ENCODE measurements at regions of chr12 and their contacts with region 1.

Region 1: DNA sequence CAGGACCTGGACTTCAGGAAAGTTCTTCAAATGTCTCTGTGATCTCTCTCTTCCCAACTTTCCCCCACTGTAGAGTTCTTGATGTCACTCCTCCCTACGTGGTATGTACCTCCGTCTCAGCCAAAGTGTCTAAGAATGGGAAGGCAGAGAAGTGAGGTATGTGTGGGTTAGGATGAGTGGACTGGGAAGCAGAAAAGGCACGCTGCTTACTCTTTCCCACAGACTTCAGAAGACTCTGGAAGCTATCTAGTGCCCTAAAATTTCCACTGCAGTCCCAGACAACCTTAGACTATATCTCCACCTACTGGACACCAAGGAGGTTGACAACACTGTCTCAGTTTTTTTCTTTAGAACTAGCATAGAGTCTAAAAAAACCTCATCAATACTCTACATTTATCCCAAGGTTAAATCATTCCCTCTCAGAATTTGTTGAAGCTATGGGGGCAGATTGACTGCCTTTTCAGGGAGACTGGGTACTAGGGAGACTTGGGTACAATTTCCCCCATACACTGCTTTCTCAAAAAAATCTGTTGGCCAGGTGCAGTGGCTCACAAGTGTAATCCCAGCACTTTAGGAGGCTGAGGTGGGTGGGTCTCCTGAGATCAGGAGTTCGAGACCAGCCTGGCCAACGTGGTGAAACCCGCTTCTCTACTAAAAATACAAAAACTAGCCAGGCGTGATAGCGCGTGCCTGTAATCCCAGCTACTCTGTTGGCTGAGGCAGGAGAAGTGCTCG is 20.6 kb upstream of the ITGA5 start:
- DNase-seq: no peak
- H3K4me3 ChIP-seq: peak overlapping the region in 1 of 2 donors; percentile 12
- H3K27ac ChIP-seq: peak overlapping the region; percentile 57 to 74
- H3K4me1 ChIP-seq: peaks cover 0 to 36% (median 8%) of the 10 kb centered on the region in 4 donors
- H3K27me3 ChIP-seq: no peaks in the 10 kb centered on the region
- CTCF ChIP-seq: peak; percentile 79 to 95

Region 2: DNA sequence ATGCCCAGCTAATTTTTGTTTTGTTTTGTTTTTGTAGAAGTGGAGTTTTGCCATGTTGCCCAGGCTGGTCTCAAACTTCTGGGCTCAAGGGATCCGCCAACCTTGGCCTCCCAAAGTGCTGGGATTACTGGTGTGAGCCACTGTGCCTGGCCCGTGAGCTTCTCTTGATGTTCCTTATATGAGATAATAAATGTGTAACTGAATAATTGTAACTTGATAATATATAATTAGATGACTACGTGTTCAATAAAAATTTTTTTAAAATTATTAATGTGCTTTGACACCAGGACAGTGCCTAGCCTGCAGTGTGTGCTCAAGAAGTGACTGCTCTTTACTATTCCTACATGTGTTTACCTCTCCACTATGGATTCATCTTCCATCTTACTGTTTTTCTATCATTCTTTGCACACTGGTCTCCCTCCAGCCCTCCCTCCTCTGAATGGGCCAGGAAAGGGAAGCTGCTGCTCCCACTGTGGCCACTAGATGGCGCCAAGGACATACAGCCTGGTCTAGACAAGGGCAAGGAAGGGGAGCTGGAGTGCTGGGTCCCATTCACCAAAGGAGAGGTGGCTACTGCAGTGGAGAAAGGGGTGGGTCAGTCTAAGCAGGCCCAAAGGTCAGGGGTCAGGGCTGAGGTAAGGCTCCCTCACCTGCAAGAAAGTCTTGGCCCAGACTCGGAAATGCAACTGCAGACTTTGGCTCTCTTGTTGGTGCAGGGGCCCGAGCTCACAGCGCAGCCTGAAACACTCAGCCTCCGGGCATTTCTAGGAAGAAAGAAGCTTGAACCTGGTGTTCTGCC is 40.5 kb before region 1 on chr12:
- intact Hi-C with region 1: loop called (anchors 5 kb)
- DNase-seq: peak; percentile 93 to 94
- H3K4me3 ChIP-seq: no peak overlapping the region
- H3K27ac ChIP-seq: peak overlapping the region; percentile 10 to 31
- H3K4me1 ChIP-seq: peaks cover 0 to 19% (median 4%) of the 10 kb centered on the region in 4 donors
- H3K27me3 ChIP-seq: no peaks in the 10 kb centered on the region
- CTCF ChIP-seq: peak; percentile 95 to 96

Measured in tibial artery (tissue), 4 donors.